Natural killer cell (primary cell): ENCODE measurements at regions of chr12 and their contacts with region 1.

Region 1: DNA sequence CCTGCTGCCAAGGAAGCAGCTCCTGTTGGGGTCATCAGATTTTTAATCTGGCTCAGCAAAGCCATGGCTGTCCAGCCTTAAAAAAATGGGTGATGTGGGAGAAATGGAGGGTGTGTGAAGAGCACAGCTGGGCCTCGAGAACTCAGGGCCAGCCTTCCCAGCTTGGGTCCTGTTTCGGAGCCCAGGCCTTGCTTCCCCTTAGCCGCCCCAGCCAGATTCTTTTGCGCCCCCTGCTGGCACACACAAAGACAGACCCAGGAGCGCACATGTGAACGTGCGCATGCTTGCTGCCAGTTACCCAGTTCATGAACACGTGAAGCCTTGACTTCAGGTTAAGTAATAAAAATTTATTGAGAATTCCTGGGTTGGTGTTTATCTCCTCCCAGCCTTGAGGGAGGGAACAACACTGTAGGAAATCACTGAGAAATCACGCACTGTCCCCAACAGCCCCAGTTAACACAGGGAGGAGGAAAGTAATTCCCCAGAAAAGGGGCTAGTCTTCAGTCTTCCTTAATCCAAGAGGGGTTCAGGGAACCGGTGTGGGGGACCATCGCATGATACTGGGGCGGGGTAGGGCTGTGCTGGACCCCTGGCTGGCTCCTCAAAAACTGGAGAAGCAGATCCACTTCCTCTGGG is 5.3 kb downstream of the PHB2 start:
- DNase-seq: peak; percentile 84 to 95
- ATAC-seq: peak; percentile 53 to 70 (median 54)
- H3K4me3 ChIP-seq: no peak overlapping the region
- H3K4me3 Mint-ChIP-seq: peak overlapping the region; percentile 21
- H3K27ac ChIP-seq: peak overlapping the region; percentile 38
- H3K27ac Mint-ChIP-seq: peak overlapping the region; percentile 80 to 82
- H3K4me1 ChIP-seq: peaks cover 52% of the 10 kb centered on the region
- H3K4me1 Mint-ChIP-seq: peaks cover 32 to 41% of the 10 kb centered on the region in 2 donors
- H3K27me3 ChIP-seq: no peaks in the 10 kb centered on the region
- H3K27me3 Mint-ChIP-seq: no peaks in the 10 kb centered on the region
- CTCF ChIP-seq: peak; percentile 88

Region 2: DNA sequence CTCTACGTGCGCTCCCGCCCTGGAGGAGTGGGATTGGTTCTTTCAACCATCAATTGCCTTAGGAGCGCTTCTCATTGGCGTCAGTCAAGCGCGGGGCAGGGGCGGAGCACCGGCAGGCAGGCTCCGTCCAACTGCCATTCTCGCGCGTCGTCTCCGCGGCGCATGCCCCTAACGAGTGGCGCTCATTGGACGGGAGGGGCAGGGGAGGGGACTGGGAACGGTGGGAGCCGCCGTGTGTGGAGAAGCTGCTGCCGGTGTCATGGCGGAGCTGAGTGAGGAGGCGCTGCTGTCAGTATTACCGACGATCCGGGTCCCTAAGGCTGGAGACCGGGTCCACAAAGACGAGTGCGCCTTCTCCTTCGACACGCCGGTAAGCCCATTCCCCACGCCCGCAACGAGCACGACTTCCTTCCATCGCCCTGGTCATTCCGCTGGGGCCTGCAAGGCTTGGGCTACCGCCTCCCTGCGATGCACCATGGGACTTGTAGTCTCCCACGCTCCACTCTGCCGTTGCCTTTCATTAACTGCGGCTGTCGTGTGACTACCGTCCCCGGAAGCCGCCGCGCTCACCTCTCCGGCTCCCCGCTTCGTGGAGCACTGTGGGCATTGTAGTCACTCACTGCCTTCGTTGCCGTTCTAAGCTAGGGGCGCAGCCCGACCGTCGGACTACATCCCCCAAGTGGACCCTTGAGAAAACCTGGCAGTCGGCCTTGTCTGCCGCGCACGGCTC is 113.1 kb before region 1 on chr12 and contains the start of gene USP5:
- intact Hi-C with region 1: loop called (anchors 1 kb)
- DNase-seq: peak; percentile 96 to 99
- ATAC-seq: peak; percentile 79 to 92 (median 80)
- H3K4me3 ChIP-seq: peak within 1 kb of the TSS; percentile 76
- H3K4me3 Mint-ChIP-seq: peak within 1 kb of the TSS; percentile 91
- H3K27ac ChIP-seq: peak within 1 kb of the TSS; percentile 95
- H3K27ac Mint-ChIP-seq: peak within 1 kb of the TSS; percentile 95 to 99
- H3K4me1 ChIP-seq: peaks cover 22% of the 10 kb centered on the region
- H3K4me1 Mint-ChIP-seq: peaks cover 8 to 43% of the 10 kb centered on the region in 2 donors
- H3K27me3 ChIP-seq: no peaks in the 10 kb centered on the region
- H3K27me3 Mint-ChIP-seq: no peaks in the 10 kb centered on the region
- CTCF ChIP-seq: no peak
- total RNA-seq, gene USP5: 48.3 to 67.2 (median 57.2) TPM

Region 3: GRCh38 chr12:6925540-6926279 is 39.4 kb before region 1 on chr12:
- intact Hi-C with region 1: loop called (anchors 1 kb)
- DNase-seq: no peak
- ATAC-seq: no peak
- H3K4me3 ChIP-seq: no peak overlapping the region
- H3K4me3 Mint-ChIP-seq: peak overlapping the region; percentile 90
- H3K27ac ChIP-seq: no peak overlapping the region
- H3K27ac Mint-ChIP-seq: peak overlapping the region in 1 of 2 donors; percentile 89
- H3K4me1 ChIP-seq: peaks cover 43% of the 10 kb centered on the region
- H3K4me1 Mint-ChIP-seq: peaks cover 38 to 43% of the 10 kb centered on the region in 2 donors
- H3K27me3 ChIP-seq: no peaks in the 10 kb centered on the region
- H3K27me3 Mint-ChIP-seq: no peaks in the 10 kb centered on the region
- CTCF ChIP-seq: no peak

Region 4: GRCh38 chr12:6937481-6938297 is 27.5 kb before region 1 on chr12:
- intact Hi-C with region 1: loop called (anchors 1 kb)
- DNase-seq: peak; percentile 88 to 99
- ATAC-seq: peak; percentile 96 to 99 (median 97)
- H3K4me3 ChIP-seq: peak overlapping the region; percentile 60
- H3K4me3 Mint-ChIP-seq: peak overlapping the region; percentile 83
- H3K27ac ChIP-seq: peak overlapping the region; percentile 74
- H3K27ac Mint-ChIP-seq: peak overlapping the region; percentile 82 to 90
- H3K4me1 ChIP-seq: peaks cover 27% of the 10 kb centered on the region
- H3K4me1 Mint-ChIP-seq: peaks cover 11 to 35% of the 10 kb centered on the region in 2 donors
- H3K27me3 ChIP-seq: no peaks in the 10 kb centered on the region
- H3K27me3 Mint-ChIP-seq: no peaks in the 10 kb centered on the region
- CTCF ChIP-seq: peak; percentile 86

Region 5: GRCh38 chr12:6944381-6945186 is 20.6 kb before region 1 on chr12:
- intact Hi-C with region 1: loop called (anchors 1 kb)
- DNase-seq: peak; percentile 83 to 94
- ATAC-seq: peak; percentile 51 to 73 (median 53)
- H3K4me3 ChIP-seq: peak overlapping the region; percentile 91
- H3K4me3 Mint-ChIP-seq: peak overlapping the region; percentile 82
- H3K27ac ChIP-seq: peak overlapping the region; percentile 99
- H3K27ac Mint-ChIP-seq: peak overlapping the region; percentile 98 to 99
- H3K4me1 ChIP-seq: peaks cover 66% of the 10 kb centered on the region
- H3K4me1 Mint-ChIP-seq: peaks cover 61 to 69% of the 10 kb centered on the region in 2 donors
- H3K27me3 ChIP-seq: no peaks in the 10 kb centered on the region
- H3K27me3 Mint-ChIP-seq: no peaks in the 10 kb centered on the region
- CTCF ChIP-seq: peak; percentile 90

Region 6: GRCh38 chr12:6953442-6954315 is 11.5 kb before region 1 on chr12:
- intact Hi-C with region 1: loop called (anchors 1 kb)
- DNase-seq: peak; percentile 70 to 89
- ATAC-seq: peak; percentile 19 to 54 (median 25)
- H3K4me3 ChIP-seq: peak overlapping the region; percentile 93
- H3K4me3 Mint-ChIP-seq: peak overlapping the region; percentile 91
- H3K27ac ChIP-seq: peak overlapping the region; percentile 96
- H3K27ac Mint-ChIP-seq: peak overlapping the region; percentile 98 to 99
- H3K4me1 ChIP-seq: peaks cover 90% of the 10 kb centered on the region
- H3K4me1 Mint-ChIP-seq: peaks cover 84 to 98% of the 10 kb centered on the region in 2 donors
- H3K27me3 ChIP-seq: no peaks in the 10 kb centered on the region
- H3K27me3 Mint-ChIP-seq: no peaks in the 10 kb centered on the region
- CTCF ChIP-seq: no peak